Activated CD4-positive, alpha-beta T cell treated with anti-CD3 and anti-CD28 coated beads for 36 hours (primary cell): ENCODE measurements at regions of chr13 and their contacts with region 1.

Region 1: GRCh38 chr13:42497798-42498197 is 76.2 kb upstream of the TNFSF11 start:
- DNase-seq: peak; percentile 56
- ATAC-seq: peak; percentile 86
- H3K4me3 Mint-ChIP-seq: no peak overlapping the region
- H3K27ac Mint-ChIP-seq: peak overlapping the region; percentile 71
- H3K4me1 Mint-ChIP-seq: peaks cover 54% of the 10 kb centered on the region
- H3K27me3 Mint-ChIP-seq: no peaks in the 10 kb centered on the region

Region 2: GRCh38 chr13:41456768-41457588 is 1040.8 kb before region 1 on chr13 and contains the start of gene RGCC:
- CTCF ChIA-PET with region 1: no interaction called
- POLR2A ChIA-PET with region 1: no interaction called
- intact Hi-C with region 1: loop called in 1 of 2 experiments (anchors 5 kb)
- DNase-seq: peak; percentile 96
- ATAC-seq: peak; percentile 74
- H3K4me3 Mint-ChIP-seq: peak within 1 kb of the TSS; percentile 82
- H3K27ac Mint-ChIP-seq: peak within 1 kb of the TSS; percentile 97
- H3K4me1 Mint-ChIP-seq: peaks cover 36% of the 10 kb centered on the region
- H3K27me3 Mint-ChIP-seq: no peaks in the 10 kb centered on the region
- total RNA-seq, gene RGCC: 134 to 146 TPM

Region 3: GRCh38 chr13:42271337-42272114 is 226.3 kb before region 1 on chr13:
- CTCF ChIA-PET with region 1: interaction called, 7 read pairs
- POLR2A ChIA-PET with region 1: interaction called, 5 read pairs
- intact Hi-C with region 1: loop called (anchors 1 to 5 kb)
- DNase-seq: peak; percentile 95
- ATAC-seq: peak; percentile 87
- H3K4me3 Mint-ChIP-seq: peak overlapping the region; percentile 99
- H3K27ac Mint-ChIP-seq: peak overlapping the region; percentile 93
- H3K4me1 Mint-ChIP-seq: peaks cover 48% of the 10 kb centered on the region
- H3K27me3 Mint-ChIP-seq: no peaks in the 10 kb centered on the region

Region 4: GRCh38 chr13:42354241-42355091 is 143.3 kb before region 1 on chr13:
- CTCF ChIA-PET with region 1: no interaction called
- POLR2A ChIA-PET with region 1: interaction called, 8 read pairs
- intact Hi-C with region 1: loop called (anchors 1 kb)
- DNase-seq: peak; percentile 67
- ATAC-seq: peak; percentile 62
- H3K4me3 Mint-ChIP-seq: peak overlapping the region; percentile 67
- H3K27ac Mint-ChIP-seq: peak overlapping the region; percentile 100
- H3K4me1 Mint-ChIP-seq: peaks cover 73% of the 10 kb centered on the region
- H3K27me3 Mint-ChIP-seq: no peaks in the 10 kb centered on the region

Region 5: DNA sequence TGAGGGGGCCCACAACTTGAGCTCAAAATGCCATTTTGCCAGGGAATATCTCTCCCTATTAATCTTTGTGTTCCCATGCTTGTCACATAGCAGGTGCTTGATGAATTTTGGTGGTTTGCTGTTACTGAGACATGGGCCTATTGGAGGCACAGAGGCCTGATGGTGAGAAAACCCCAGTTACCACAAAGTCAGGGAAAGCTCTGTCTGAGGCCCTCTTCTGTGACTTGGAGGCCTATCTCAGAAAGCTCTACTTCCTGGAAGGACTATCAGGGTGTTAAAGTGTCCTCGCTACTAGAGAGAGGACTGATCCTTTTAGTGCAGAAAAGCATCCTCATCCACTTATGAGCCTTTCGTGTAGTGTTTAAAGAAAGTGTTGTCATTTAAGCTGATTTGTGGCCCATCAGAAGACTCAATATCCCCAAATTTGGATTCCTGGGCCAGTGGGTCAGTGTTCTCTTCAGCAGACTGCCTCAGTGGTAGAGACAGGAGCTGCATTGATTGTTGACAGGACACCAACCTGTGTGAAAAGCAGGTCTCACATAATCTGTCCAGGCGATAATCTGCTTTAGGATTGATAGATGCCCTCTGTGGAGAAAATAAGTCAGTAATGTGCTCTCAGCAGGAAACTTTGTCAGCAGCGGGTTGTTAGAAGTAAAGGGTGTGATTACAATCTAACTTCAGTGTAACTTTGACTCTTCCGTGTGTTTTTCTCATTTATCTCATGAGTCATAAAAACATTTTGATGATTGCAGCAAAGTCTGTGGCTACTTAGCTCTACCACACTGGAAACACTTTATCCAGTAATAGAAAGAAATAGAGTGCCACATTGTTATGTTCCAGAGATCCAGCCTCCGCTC is 104.9 kb before region 1 on chr13:
- CTCF ChIA-PET with region 1: interaction called, 3 read pairs
- POLR2A ChIA-PET with region 1: interaction called, 10 read pairs
- intact Hi-C with region 1: loop called (anchors 1 to 2 kb)
- DNase-seq: peak; percentile 46
- ATAC-seq: peak; percentile 57
- H3K4me3 Mint-ChIP-seq: peak overlapping the region; percentile 80
- H3K27ac Mint-ChIP-seq: peak overlapping the region; percentile 100
- H3K4me1 Mint-ChIP-seq: peaks cover 80% of the 10 kb centered on the region
- H3K27me3 Mint-ChIP-seq: no peaks in the 10 kb centered on the region

Region 6: DNA sequence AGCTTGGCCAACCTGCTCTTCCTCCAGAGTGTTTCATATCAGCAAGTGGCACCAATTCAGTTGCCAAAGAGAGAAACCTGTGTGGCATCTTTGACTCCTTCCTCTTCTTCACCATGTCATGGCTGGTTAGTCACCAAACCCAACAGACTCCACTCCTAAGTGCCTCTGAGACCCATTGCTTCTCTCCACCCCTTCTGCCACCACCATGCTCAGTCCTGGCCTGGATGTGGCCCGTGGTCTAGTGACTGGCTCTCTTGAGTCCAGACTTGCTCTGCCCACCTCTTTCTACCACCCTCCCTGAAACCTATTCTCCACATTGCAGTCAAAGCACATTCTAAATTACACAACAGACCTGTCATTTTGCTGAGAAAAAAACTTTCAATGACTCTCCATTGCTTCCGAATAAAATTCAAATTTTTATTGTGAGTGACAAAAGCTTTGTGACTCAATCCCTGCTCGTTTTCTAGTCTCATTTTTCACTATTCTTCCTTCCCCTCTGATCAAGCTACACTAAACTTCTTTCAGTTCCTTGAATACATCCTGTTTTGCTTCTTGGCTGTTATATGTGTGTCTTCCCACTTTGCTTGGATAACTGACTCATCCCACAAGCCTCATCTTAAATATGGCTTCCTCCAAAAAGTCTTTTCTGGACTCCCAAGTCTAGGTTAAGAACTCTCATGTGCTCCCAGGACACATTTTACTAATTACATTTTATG is 64.1 kb after region 1 on chr13:
- CTCF ChIA-PET with region 1: interaction called, 5 read pairs
- POLR2A ChIA-PET with region 1: no interaction called
- intact Hi-C with region 1: loop called (anchors 1 kb)
- DNase-seq: peak; percentile 56
- ATAC-seq: peak; percentile 90
- H3K4me3 Mint-ChIP-seq: no peak overlapping the region
- H3K27ac Mint-ChIP-seq: peak overlapping the region; percentile 13
- H3K4me1 Mint-ChIP-seq: peaks cover 17% of the 10 kb centered on the region
- H3K27me3 Mint-ChIP-seq: no peaks in the 10 kb centered on the region

Region 7: GRCh38 chr13:43041369-43041921 is 543.6 kb after region 1 on chr13:
- CTCF ChIA-PET with region 1: no interaction called
- POLR2A ChIA-PET with region 1: no interaction called
- intact Hi-C with region 1: loop called in 1 of 2 experiments (anchors 10 kb)
- DNase-seq: no peak
- ATAC-seq: no peak
- H3K4me3 Mint-ChIP-seq: no peak overlapping the region
- H3K27ac Mint-ChIP-seq: peak overlapping the region; percentile 17
- H3K4me1 Mint-ChIP-seq: peaks cover 72% of the 10 kb centered on the region
- H3K27me3 Mint-ChIP-seq: no peaks in the 10 kb centered on the region